ENCODE measurements at regions of chr4 and their contacts with region 1.

Region 1: DNA sequence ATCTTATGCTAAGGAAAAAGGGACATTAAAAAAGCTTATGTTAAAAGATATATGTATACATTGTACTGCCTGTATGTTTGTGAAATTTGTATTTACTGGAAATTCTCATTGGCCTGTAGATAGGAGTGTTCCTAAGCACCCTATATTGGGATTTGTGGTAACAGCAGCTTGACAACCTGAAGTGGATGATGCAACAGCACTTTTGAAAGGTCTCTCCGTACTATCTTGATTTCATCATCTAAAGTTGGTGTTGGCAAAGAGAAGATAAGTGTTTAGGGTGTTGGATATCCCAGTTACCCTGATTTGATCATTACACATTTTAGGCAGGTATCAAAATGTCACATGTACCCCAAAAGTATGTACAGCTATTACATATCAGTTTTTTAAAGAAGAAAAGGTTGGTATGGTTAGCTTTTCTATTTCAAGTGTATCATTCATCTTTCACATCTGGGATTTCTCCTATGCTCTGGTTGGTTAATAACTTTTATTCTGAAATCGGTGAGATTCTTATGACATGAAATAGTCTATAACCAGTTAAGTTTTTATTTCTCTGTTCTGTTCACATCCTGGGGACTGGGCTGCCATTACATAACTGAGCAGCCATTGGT is 10.3 kb downstream of the HADH start:
- DNase-seq: no peak
- ATAC-seq: no peak
- H3K4me3 Mint-ChIP-seq: no peak overlapping the region
- H3K27ac Mint-ChIP-seq: peak overlapping the region; percentile 4
- H3K4me1 Mint-ChIP-seq: peaks cover 28% of the 10 kb centered on the region
- H3K27me3 Mint-ChIP-seq: no peaks in the 10 kb centered on the region
- CTCF ChIP-seq: no peak

Region 2: GRCh38 chr4:107989537-107990386 is 10.3 kb before region 1 on chr4 and contains the start of gene HADH:
- CTCF ChIA-PET with region 1: interaction called, 3 read pairs
- POLR2A ChIA-PET with region 1: interaction called, 12 read pairs
- intact Hi-C with region 1: no loop called
- DNase-seq: peak; percentile 95
- ATAC-seq: peak; percentile 98
- H3K4me3 Mint-ChIP-seq: peak within 1 kb of the TSS; percentile 81
- H3K27ac Mint-ChIP-seq: peak within 1 kb of the TSS; percentile 92
- H3K4me1 Mint-ChIP-seq: peaks cover 39% of the 10 kb centered on the region
- H3K27me3 Mint-ChIP-seq: no peaks in the 10 kb centered on the region
- CTCF ChIP-seq: no peak
- total RNA-seq, gene HADH: 50.3 to 50.7 TPM

Region 3: DNA sequence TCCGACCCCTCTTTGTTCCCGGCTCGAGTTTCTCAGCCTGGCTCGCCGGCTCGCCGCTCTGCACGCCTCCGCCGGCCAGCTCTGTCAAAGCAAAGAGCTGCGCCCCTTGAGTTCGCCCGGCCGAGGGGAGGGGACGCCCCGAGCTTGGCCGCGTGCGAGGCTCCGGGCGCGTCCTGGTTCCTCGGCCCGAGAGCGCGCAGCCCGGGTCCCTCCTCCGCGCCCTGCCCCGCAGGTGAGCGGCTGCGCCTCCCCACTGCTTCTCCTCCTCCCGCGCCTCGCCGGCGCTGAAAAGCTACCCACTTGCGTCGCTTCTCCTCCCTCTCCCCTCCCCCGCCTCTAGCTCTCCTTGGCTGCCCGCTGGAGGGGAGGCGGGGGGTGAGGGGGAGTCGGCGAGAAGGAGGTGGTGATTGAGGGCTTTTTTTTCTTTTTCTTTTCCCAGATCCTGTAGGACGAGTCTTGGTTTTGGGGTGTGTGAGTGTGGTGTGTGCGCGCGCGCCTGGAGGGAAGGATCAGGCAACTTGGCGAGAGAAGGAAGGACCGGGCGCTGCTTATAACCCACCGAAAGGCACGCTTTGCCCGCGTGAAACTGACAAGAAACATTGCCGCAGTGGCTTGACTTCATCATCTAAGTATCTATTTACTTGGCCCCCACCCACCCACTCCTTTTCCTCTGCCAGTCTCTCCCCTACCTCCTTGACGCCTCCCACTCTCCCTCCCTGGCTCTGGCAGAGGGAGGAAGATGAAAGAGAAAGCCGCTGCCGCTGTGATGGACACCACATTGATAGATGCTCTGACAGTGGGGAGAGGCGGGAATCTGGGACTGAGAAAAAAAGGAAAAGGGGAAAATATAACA is 168.9 kb after region 1 on chr4 and contains the start of gene LEF1:
- CTCF ChIA-PET with region 1: no interaction called
- POLR2A ChIA-PET with region 1: no interaction called
- intact Hi-C with region 1: no loop called
- DNase-seq: peak; percentile 82
- ATAC-seq: peak; percentile 29
- H3K4me3 Mint-ChIP-seq: peak within 1 kb of the TSS; percentile 87
- H3K27ac Mint-ChIP-seq: peak within 1 kb of the TSS; percentile 98
- H3K4me1 Mint-ChIP-seq: peaks cover 27% of the 10 kb centered on the region
- H3K27me3 Mint-ChIP-seq: peaks cover 9% of the 10 kb centered on the region
- CTCF ChIP-seq: no peak
- total RNA-seq, gene LEF1: 178 to 182 TPM

Region 4: DNA sequence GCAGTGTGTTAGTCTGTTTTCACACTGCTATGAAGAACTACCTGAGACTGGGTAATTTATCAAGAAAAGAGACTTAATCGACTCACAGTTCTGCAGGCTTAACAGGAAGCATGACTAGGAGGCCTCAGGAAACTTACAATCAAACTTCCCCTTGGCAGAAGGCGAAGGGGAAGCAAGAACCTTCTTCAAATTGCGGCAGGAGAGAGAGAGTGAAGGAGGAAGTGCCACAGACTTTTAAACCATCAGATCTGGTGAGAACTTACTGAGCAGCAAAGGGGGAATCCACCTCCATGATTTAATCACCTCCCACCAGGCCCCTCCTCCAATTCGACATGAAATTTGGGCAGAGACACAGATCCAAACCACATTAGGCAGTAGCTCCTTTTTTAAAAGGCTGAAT is 227.9 kb after region 1 on chr4:
- CTCF ChIA-PET with region 1: no interaction called
- POLR2A ChIA-PET with region 1: no interaction called
- intact Hi-C with region 1: no loop called
- DNase-seq: no peak
- ATAC-seq: no peak
- H3K4me3 Mint-ChIP-seq: no peak overlapping the region
- H3K27ac Mint-ChIP-seq: no peak overlapping the region
- H3K4me1 Mint-ChIP-seq: peaks cover 6% of the 10 kb centered on the region
- H3K27me3 Mint-ChIP-seq: no peaks in the 10 kb centered on the region
- CTCF ChIP-seq: no peak